ENCODE measurements at regions of chr17 and their contacts with region 1.

Region 1: DNA sequence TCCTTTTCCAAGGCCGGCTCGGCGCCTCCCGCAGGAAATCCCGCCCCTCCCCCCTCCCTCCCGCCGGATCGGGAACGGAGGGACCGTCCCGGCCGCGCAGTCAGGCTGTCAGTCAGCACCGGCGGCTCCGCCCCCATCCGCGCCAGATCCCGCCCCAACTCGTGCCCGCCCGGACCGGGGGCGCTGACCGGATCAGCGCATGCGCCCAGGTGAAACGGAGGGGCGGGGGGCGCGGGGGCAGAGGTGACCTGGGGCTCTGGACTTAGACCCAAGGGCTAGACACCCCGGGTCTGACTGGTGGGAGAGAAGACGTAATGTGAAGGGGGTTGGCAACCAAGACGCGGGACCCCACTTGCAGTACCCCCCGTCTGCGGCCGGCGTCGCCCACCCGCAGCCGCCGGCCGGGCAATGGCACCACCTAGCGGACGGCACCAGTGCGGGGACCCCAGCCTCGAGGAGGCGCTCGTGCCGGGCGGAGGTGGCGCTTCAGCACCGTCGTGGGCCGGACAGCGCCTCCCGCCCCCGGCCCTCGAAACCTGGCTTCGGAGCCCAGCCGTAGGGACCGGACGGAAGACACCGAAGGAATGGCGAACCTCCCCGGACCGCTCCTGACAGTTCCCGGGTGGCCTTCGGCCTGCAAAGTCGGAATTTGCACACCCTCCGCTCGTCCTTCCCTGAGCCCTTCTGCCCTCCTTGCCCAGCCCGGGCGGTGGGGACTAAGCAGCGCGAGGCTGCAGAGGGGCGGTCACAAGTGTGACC is at the start of gene CASKIN2:
- DNase-seq: peak; percentile 57 to 88 (median 70)
- ATAC-seq: peak; percentile 80
- H3K4me3 ChIP-seq: peak within 1 kb of the TSS; percentile 97
- H3K4me3 Mint-ChIP-seq: peak within 1 kb of the TSS; percentile 69 to 85 (median 78)
- H3K27ac ChIP-seq: no peak within 1 kb of the TSS
- H3K27ac Mint-ChIP-seq: peak within 1 kb of the TSS in 4 of 9 donors; percentile 36 to 63 (median 47)
- H3K4me1 ChIP-seq: peaks cover 23 to 25% of the 10 kb centered on the region in 2 donors
- H3K4me1 Mint-ChIP-seq: peaks cover 18 to 28% (median 22%) of the 10 kb centered on the region in 7 donors
- H3K27me3 ChIP-seq: no peaks in the 10 kb centered on the region
- H3K27me3 Mint-ChIP-seq: peaks cover 0 to 14% (median 0%) of the 10 kb centered on the region in 5 donors
- total RNA-seq, gene CASKIN2: 0.22 to 1.2 (median 0.92) TPM

Region 2: GRCh38 chr17:75456417-75457046 is 59.1 kb before region 1 on chr17 and contains the start of gene TMEM94:
- CTCF ChIA-PET with region 1: interaction called, 3 read pairs
- POLR2A ChIA-PET with region 1: interaction called, 8 read pairs
- intact Hi-C with region 1: loop called (anchors 1 kb)
- DNase-seq: peak; percentile 70 to 93 (median 89)
- ATAC-seq: peak; percentile 98
- H3K4me3 ChIP-seq: peak within 1 kb of the TSS; percentile 99
- H3K4me3 Mint-ChIP-seq: peak within 1 kb of the TSS; percentile 92 to 99 (median 94)
- H3K27ac ChIP-seq: peak within 1 kb of the TSS; percentile 74
- H3K27ac Mint-ChIP-seq: peak within 1 kb of the TSS; percentile 84 to 99 (median 93)
- H3K4me1 ChIP-seq: peaks cover 10% of the 10 kb centered on the region in 2 donors
- H3K4me1 Mint-ChIP-seq: peaks cover 25 to 42% (median 34%) of the 10 kb centered on the region in 7 donors
- H3K27me3 ChIP-seq: no peaks in the 10 kb centered on the region
- H3K27me3 Mint-ChIP-seq: no peaks in the 10 kb centered on the region
- total RNA-seq, gene TMEM94: 74.1 to 97.2 (median 81.9) TPM

Region 3: DNA sequence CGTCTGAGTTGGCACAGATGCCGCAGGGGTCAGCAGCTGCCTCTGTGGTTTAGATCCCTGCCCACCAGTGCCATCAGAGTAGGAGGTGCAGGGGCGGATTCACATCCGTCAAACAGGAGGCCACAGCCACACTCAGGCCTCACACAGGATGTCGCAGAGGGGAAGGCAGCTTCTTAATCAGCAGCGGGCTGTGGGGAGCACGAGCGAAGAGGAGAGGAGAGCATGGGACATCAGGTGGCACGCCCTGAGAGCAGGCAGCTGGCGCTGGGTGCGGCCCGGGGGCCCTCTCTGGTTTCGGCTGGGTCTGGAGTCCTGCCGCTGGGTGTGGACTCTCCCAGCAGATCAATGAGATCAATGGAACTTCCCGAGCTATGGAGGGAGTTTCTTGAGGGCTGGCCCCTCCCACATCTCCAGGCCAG is 19.5 kb after region 1 on chr17:
- CTCF ChIA-PET with region 1: no interaction called
- POLR2A ChIA-PET with region 1: interaction called, 3 read pairs
- intact Hi-C with region 1: loop called in 1 of 2 experiments (anchors 1 kb)
- DNase-seq: peak in 8 of 9 donors; percentile 23 to 52 (median 46)
- ATAC-seq: peak; percentile 92
- H3K4me3 ChIP-seq: peak overlapping the region; percentile 30
- H3K4me3 Mint-ChIP-seq: peak overlapping the region; percentile 58 to 79 (median 71)
- H3K27ac ChIP-seq: peak overlapping the region; percentile 55
- H3K27ac Mint-ChIP-seq: peak overlapping the region; percentile 82 to 94 (median 89)
- H3K4me1 ChIP-seq: peaks cover 17 to 24% of the 10 kb centered on the region in 2 donors
- H3K4me1 Mint-ChIP-seq: peaks cover 15 to 32% (median 23%) of the 10 kb centered on the region in 7 donors
- H3K27me3 ChIP-seq: no peaks in the 10 kb centered on the region
- H3K27me3 Mint-ChIP-seq: no peaks in the 10 kb centered on the region

Region 4: DNA sequence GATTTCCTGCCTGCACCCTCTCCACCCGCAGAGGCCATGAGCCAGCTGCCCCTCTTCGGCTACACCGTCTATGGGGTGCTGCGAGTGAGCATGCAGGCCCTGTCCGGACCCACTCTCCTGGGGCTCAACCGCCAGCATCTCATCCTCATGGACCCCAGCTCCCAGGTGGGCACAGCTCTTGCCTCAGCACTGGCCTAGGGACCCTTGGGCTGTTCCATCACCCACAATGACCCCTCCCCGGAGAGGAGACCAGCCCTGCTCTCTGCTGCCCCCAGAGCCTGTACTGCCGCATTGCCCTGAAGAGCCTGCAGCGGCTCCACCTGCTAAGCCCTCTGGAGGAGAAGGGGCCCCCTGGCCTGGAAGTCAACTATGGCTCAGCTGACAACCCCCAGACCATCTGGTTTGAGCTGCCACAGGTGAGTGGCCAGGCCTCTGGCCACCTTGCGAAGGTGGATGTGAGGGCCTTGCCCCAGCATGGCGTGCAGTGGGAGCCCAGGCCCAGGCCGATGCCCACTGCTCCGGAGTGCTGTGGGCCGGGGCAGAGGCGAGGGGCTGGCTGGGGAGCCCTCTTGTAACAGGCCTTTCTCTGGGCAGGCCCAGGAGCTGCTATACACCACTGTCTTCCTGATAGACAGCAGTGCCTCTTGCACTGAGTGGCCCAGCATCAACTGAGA is 110.3 kb after region 1 on chr17:
- CTCF ChIA-PET with region 1: no interaction called
- POLR2A ChIA-PET with region 1: no interaction called
- intact Hi-C with region 1: no loop called
- DNase-seq: peak in 2 of 9 donors; percentile 13 to 15
- ATAC-seq: peak; percentile 66
- H3K4me3 ChIP-seq: no peak overlapping the region
- H3K4me3 Mint-ChIP-seq: no peak overlapping the region
- H3K27ac ChIP-seq: no peak overlapping the region
- H3K27ac Mint-ChIP-seq: peak overlapping the region in 1 of 9 donors; percentile 86
- H3K4me1 ChIP-seq: no peaks in the 10 kb centered on the region
- H3K4me1 Mint-ChIP-seq: peaks cover 0 to 5% (median 0%) of the 10 kb centered on the region in 7 donors
- H3K27me3 ChIP-seq: no peaks in the 10 kb centered on the region
- H3K27me3 Mint-ChIP-seq: no peaks in the 10 kb centered on the region

Measured in naive thymus-derived CD4-positive, alpha-beta T cell (primary cell).